Gastrocnemius medialis (tissue), 4 donors: ENCODE measurements at regions of chr10 and their contacts with region 1.

Region 1: DNA sequence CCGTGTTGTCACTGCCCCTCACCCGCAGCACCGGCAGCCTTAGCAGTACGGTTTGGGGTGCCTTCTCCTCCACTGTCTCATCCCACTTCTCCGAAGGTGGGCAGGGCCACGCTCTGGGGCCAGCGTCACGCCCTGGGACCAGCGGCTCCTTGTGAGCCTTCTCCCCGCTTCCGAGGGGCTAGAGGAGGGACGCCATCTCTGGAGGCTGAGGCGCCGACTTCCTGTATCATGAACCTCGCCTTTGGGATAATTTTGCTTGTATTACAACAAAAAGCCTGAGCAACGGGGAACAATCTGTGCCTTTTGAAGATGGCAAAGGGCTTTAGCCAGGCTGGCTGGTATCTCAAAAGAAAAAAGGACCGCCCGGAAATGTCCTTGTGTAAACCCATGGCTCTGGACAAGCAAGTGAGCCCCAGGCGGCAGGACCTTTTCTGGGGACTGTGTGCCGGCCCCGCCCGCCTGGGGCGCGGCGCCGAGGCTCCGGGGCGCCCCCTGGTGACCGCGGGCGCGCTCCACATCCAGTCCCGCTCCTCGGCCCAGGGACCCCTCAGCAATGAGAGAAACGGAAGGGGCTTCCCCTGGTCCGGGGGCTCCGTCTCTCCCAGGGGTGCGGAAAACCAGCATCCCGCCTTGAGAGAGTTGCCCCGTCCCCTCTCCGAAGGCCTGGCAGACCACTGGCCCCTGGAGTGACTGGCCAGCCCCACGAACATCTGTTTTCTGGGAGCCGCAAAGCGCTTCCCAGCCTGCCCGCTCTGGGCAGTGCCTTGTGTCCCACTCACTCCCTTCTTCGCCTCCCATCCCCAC is 3.8 kb downstream of the DEPP1 start:
- DNase-seq: peak; percentile 64 to 78
- ATAC-seq: peak; percentile 49 to 55
- H3K4me3 ChIP-seq: peak overlapping the region; percentile 46 to 81 (median 66)
- H3K27ac ChIP-seq: peak overlapping the region; percentile 84 to 94 (median 90)
- H3K4me1 ChIP-seq: peaks cover 50 to 54% of the 10 kb centered on the region in 2 donors
- H3K27me3 ChIP-seq: no peaks in the 10 kb centered on the region
- CTCF ChIP-seq: peak; percentile 83 to 99 (median 98)
- POLR2A ChIP-seq: peak in 1 of 2 donors; percentile 10

Region 2: GRCh38 chr10:43407576-43408330 is 1567.1 kb before region 1 on chr10:
- in situ Hi-C with region 1: loop called in 2 of 4 experiments (anchors 25 kb)
- intact Hi-C with region 1: loop called (anchors 5 kb)
- DNase-seq: peak; percentile 90 to 91
- ATAC-seq: peak; percentile 76 to 82
- H3K4me3 ChIP-seq: peak overlapping the region; percentile 69 to 90 (median 84)
- H3K27ac ChIP-seq: peak overlapping the region; percentile 95 to 98 (median 96)
- H3K4me1 ChIP-seq: peaks cover 24 to 37% of the 10 kb centered on the region in 2 donors
- H3K27me3 ChIP-seq: no peaks in the 10 kb centered on the region
- CTCF ChIP-seq: peak in 4 of 5 experiments; percentile 32 to 54 (median 47)
- POLR2A ChIP-seq: peak; percentile 82 to 87

Region 3: GRCh38 chr10:44878706-44879530 is 95.9 kb before region 1 on chr10:
- in situ Hi-C with region 1: no loop called
- intact Hi-C with region 1: loop called (anchors 10 kb)
- DNase-seq: peak; percentile 65 to 75
- ATAC-seq: peak; percentile 85 to 90
- H3K4me3 ChIP-seq: peak overlapping the region; percentile 51 to 63 (median 54)
- H3K27ac ChIP-seq: peak overlapping the region; percentile 50 to 56 (median 52)
- H3K4me1 ChIP-seq: peaks cover 10 to 11% of the 10 kb centered on the region in 2 donors
- H3K27me3 ChIP-seq: no peaks in the 10 kb centered on the region
- CTCF ChIP-seq: no peak
- POLR2A ChIP-seq: no peak

Region 4: GRCh38 chr10:44898635-44899034 is 76.2 kb before region 1 on chr10:
- in situ Hi-C with region 1: no loop called
- intact Hi-C with region 1: no loop called
- DNase-seq: no peak
- ATAC-seq: no peak
- H3K4me3 ChIP-seq: no peak overlapping the region
- H3K27ac ChIP-seq: no peak overlapping the region
- H3K4me1 ChIP-seq: no peaks in the 10 kb centered on the region
- H3K27me3 ChIP-seq: no peaks in the 10 kb centered on the region
- CTCF ChIP-seq: no peak
- POLR2A ChIP-seq: no peak

Region 5: DNA sequence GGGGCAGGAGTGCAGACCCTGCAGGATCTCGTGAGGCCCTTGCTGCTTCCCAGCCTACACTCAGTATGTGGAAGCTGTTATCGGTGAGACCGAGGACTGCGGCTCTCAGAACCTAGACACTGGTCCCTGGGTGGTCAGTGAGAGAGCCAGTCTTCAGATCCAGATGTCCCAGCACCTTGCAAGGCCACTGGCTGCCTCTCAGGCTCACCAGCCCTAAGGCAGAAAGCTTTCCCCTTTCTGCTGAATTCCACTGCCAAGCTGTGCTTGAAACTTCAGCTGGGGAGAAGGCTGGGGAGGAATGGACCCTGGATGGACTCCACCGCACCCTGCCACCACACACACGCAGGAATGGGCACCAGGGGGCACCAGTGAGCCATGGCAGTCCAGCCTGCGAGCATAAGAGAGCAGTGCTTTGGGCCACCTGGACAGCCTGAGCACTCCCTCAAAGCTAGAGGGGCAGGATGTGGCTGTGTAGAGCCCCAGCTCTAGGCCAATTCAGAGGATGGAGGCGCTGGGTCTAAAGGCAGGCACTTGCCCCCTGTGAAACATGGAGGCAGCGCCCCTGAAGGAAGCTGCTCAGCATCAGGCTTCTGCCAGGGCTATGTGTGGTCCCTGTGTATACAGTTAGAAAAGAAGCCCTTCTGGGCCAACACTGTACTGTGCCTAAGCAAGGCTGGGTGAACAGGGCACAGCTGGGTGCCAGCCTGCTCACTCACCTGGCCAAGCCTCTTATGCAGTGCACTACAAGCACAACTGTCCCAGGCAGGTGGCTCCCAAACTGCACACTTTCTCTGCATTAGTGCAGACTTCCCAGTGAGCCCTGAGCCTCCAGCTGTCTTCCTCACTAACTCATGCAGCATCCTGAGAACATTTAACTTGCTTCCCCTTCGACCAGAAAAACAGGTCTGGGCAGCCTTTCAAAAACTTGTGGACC is 42.0 kb before region 1 on chr10:
- in situ Hi-C with region 1: loop called in 2 of 4 experiments (anchors 5 kb)
- intact Hi-C with region 1: loop called (anchors 1 kb)
- DNase-seq: peak; percentile 79 to 85
- ATAC-seq: peak; percentile 94
- H3K4me3 ChIP-seq: no peak overlapping the region
- H3K27ac ChIP-seq: no peak overlapping the region
- H3K4me1 ChIP-seq: peaks cover 16 to 19% of the 10 kb centered on the region in 2 donors
- H3K27me3 ChIP-seq: no peaks in the 10 kb centered on the region
- CTCF ChIP-seq: peak; percentile 94 to 99 (median 98)
- POLR2A ChIP-seq: no peak

Region 6: DNA sequence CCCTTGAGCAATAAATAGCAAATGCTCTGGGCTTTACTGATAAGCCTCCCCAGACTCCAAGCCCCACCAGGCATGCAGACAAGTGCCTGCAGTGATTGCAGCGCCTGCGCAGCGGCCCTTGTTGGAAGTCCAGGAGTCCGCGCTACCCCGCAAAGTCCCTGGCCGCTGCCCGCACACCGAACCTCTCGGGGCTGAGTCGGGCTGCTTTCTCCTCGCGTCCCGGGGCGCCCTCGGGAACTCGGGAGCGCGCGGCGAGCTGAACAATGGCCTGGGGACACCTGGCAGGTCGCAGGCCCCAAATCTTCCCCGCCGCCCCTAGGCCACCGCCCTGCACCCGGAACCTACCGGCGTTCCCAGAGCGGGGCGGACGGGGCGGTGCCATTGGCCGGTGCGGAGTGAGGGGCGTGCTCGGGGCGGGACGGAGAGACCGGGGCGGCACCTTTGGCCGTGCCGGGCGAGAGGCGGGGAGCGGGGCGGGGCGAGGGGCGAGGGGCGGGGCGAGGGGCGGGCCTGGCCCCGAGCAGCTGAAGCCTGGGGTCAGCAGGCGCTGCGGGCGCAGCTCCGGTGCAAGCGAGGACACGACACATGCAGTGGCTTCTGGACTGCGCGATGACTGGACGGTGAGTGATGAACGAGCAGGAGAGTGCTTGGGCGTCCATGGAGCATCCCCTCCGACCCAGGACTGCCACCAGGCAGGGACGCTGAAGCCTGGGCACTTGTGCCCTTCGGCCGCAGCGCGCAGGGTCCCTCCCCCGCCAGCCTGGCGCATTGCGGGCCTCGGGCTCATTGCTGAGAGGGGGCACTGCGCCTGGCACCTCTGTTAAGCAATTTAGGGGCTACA is 15.4 kb before region 1 on chr10 and contains the start of gene RASSF4:
- in situ Hi-C with region 1: no loop called
- intact Hi-C with region 1: loop called (anchors 1 kb)
- DNase-seq: peak; percentile 93 to 94
- ATAC-seq: peak; percentile 52 to 57
- H3K4me3 ChIP-seq: peak within 1 kb of the TSS; percentile 72 to 89 (median 86)
- H3K27ac ChIP-seq: peak within 1 kb of the TSS; percentile 92 to 97 (median 95)
- H3K4me1 ChIP-seq: peaks cover 55 to 61% of the 10 kb centered on the region in 2 donors
- H3K27me3 ChIP-seq: no peaks in the 10 kb centered on the region
- CTCF ChIP-seq: peak in 1 of 5 experiments; percentile 23
- POLR2A ChIP-seq: peak; percentile 84 to 92
- total RNA-seq, gene RASSF4: 9.4 to 39.7 (median 24.0) TPM

Region 7: GRCh38 chr10:45000752-45001380 is 26.0 kb after region 1 on chr10 and contains the start of gene ZNF22:
- in situ Hi-C with region 1: no loop called
- intact Hi-C with region 1: loop called (anchors 2 kb)
- DNase-seq: peak in 1 of 2 donors; percentile 17
- ATAC-seq: peak; percentile 17 to 25
- H3K4me3 ChIP-seq: peak within 1 kb of the TSS; percentile 55 to 64 (median 61)
- H3K27ac ChIP-seq: peak within 1 kb of the TSS; percentile 72 to 91 (median 82)
- H3K4me1 ChIP-seq: peaks cover 32 to 53% of the 10 kb centered on the region in 2 donors
- H3K27me3 ChIP-seq: no peaks in the 10 kb centered on the region
- CTCF ChIP-seq: peak in 2 of 5 experiments; percentile 26 to 30
- POLR2A ChIP-seq: peak in 1 of 2 donors; percentile 61
- total RNA-seq, gene ZNF22: 3.6 to 12.3 (median 8.1) TPM

Region 8: DNA sequence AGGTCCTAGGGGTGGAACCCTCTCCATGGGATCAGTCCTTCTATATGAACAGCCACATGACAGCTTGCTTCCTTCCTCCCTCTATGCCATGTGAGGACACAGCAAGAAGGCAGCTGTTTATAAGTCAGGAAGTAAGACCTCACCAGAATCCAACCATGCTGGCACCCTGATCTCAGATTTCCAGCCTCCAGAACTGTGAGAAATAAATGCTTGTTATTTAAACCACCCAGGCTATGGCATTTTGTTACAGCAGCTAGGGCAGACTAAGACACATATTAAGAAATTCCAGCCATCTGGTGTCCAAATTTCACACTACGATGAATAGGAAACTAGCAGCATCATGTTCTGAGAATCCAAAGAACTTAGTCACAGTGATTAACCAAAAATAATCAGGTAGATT is 557.6 kb after region 1 on chr10:
- in situ Hi-C with region 1: no loop called
- intact Hi-C with region 1: no loop called
- DNase-seq: peak in 1 of 2 donors; percentile 13
- ATAC-seq: no peak
- H3K4me3 ChIP-seq: no peak overlapping the region
- H3K27ac ChIP-seq: no peak overlapping the region
- H3K4me1 ChIP-seq: peaks cover 7 to 14% of the 10 kb centered on the region in 2 donors
- H3K27me3 ChIP-seq: no peaks in the 10 kb centered on the region
- CTCF ChIP-seq: no peak
- POLR2A ChIP-seq: no peak

Region 9: GRCh38 chr10:46022978-46023702 is 1048.3 kb after region 1 on chr10:
- in situ Hi-C with region 1: loop called in 1 of 4 experiments (anchors 25 kb)
- intact Hi-C with region 1: no loop called
- DNase-seq: peak; percentile 85 to 92
- ATAC-seq: peak; percentile 88 to 93
- H3K4me3 ChIP-seq: peak overlapping the region; percentile 65 to 96 (median 72)
- H3K27ac ChIP-seq: peak overlapping the region; percentile 88 to 96 (median 90)
- H3K4me1 ChIP-seq: peaks cover 89 to 92% of the 10 kb centered on the region in 2 donors
- H3K27me3 ChIP-seq: no peaks in the 10 kb centered on the region
- CTCF ChIP-seq: peak in 4 of 5 experiments; percentile 11 to 58 (median 18)
- POLR2A ChIP-seq: peak; percentile 67 to 77